ENCODE measurements at regions of chr17 and their contacts with region 1.

Region 1: DNA sequence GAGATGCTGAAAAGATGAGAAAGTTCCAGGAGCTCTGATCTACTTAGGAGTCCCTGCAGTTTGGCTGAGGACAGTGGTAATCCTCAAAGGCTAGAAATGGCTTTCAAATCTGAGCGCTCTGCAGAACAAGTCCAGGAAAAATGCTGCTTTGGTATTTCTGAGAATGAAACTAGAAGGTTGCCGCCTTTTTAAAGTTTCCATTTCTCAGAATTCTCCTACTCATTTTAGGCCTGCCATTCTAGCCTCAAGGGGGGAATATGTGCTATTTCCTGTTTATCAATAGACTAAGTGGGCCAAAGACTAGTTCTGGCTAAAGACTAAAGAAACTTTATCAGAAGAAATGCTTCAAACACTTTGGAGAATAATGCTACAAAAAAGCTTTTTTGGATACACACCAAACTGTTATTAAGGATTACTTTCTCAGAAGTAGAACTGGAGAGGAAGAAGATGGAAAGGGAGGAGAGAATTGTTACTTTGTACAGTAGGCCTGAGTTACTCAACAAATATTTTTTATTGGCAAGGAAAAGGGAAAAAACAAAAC is at the start of gene SLFN12L:
- DNase-seq: no peak
- H3K4me3 ChIP-seq: no peak within 1 kb of the TSS
- H3K4me3 Mint-ChIP-seq: no peak within 1 kb of the TSS
- H3K27ac Mint-ChIP-seq: no peak within 1 kb of the TSS
- H3K4me1 ChIP-seq: no peaks in the 10 kb centered on the region
- H3K4me1 Mint-ChIP-seq: no peaks in the 10 kb centered on the region
- H3K27me3 ChIP-seq: no peaks in the 10 kb centered on the region
- H3K27me3 Mint-ChIP-seq: peaks cover 19% of the 10 kb centered on the region
- CTCF ChIP-seq: no peak
- total RNA-seq, gene SLFN12L: not detected in 2 replicates

Region 2: DNA sequence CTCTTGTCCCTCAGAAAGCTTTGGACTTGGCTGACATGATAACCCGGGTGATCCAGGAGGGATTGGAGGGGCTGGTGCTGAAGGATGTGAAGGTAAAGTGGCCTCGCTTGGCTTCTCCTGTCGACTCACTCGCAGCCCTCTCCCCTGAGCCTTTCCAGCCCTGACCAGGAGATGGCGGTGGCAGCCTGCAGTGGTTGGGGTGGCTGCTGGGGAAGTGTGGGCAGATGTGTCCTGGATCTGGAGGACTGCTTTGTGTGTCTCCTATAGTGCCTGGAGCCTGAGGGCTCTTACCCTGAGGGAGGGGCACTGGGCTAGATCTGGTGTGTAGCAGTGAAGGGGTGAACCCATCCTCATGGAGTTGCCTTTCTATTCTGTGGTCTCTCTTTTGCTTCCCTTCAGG is 539.5 kb before region 1 on chr17:
- CTCF ChIA-PET with region 1: no interaction called
- POLR2A ChIA-PET with region 1: no interaction called
- intact Hi-C with region 1: loop called (anchors 10 kb)
- DNase-seq: peak; percentile 78 to 84
- H3K4me3 ChIP-seq: no peak overlapping the region
- H3K4me3 Mint-ChIP-seq: no peak overlapping the region
- H3K27ac Mint-ChIP-seq: no peak overlapping the region
- H3K4me1 ChIP-seq: no peaks in the 10 kb centered on the region
- H3K4me1 Mint-ChIP-seq: no peaks in the 10 kb centered on the region
- H3K27me3 ChIP-seq: no peaks in the 10 kb centered on the region
- H3K27me3 Mint-ChIP-seq: no peaks in the 10 kb centered on the region
- CTCF ChIP-seq: peak; percentile 86 to 97

Region 3: DNA sequence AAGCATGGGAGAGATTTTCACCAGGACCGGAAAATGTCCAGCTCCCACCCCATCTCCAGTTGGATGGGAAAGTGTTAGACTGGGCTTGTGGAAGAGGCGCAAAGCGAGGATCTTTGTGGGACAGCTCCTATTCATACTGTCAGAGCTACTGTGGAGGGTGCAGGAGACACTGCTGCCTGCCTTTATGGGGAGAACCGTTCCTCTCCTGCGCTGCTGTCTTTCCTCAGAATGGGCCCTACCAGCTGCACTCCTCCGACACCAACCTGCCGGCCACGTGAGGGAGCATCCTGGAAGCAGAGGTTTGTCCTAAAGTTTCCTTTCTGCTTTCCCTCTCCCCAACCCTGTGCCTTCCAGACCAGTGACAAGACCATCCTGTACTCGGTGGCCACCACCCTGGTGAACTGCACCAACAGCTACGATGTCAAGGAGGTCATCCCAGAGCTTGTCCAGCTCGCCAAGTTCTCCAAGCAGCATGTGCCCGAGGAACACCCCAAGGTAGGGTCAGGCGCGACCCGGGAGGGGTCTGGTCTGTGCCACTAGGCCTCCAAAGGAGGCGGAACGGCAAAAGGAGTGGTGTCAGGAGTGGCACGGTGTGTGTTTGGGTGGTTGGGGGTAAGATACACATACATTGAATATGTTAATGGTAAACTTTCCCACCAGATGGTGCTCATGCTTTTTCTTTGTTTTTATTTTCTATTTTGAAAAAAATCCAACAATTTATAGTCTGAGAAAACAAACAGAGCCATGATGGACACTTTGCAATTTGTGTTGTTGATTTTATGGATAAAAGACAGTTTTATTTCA is 366.5 kb before region 1 on chr17:
- CTCF ChIA-PET with region 1: interaction called, 6 read pairs
- POLR2A ChIA-PET with region 1: no interaction called
- intact Hi-C with region 1: loop called (anchors 1 kb)
- DNase-seq: no peak
- H3K4me3 ChIP-seq: no peak overlapping the region
- H3K4me3 Mint-ChIP-seq: no peak overlapping the region
- H3K27ac Mint-ChIP-seq: no peak overlapping the region
- H3K4me1 ChIP-seq: 0 out of 2 replicates have a peak, but pooled peaks cover 7% of the 10 kb centered on the region
- H3K4me1 Mint-ChIP-seq: peaks cover 3% of the 10 kb centered on the region
- H3K27me3 ChIP-seq: no peaks in the 10 kb centered on the region; the same call in 1 of the 2 replicates
- H3K27me3 Mint-ChIP-seq: peaks cover 3% of the 10 kb centered on the region
- CTCF ChIP-seq: no peak

Region 4: DNA sequence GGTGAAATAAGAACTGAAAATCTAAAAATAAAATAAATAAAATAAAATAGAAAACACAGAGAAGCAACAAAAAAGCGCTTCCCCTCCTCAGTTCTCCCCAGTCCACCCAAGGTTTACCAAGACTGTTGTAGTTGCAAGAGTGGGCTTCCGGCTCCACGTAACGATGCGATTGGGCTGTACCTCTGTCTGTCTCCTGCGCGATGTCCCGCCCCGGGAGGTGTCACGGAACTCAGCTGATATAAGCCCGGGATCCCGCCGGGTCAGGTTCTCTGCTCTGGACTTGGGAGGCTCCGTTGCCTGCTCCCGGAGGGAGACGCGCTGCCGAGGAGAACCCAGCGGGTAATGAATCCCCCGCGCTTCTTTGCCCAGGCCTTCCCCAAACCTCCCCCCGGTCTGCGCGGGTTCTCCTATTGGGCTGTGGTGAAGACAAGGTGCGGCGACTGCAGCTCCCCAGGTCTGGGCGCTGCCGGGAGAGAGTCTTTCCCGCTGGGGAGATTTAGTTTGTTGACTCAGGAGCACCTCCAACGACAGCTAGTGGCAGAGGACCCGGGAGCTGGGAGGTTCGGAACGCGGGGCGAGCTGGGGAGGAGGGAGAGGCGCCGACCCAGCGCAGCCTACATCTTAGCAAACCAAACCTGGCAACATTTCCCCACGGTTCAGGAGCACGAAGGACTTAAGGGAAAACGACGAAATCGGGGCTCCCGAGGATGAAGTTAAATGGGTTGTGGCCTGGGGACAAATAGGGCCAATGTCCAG is 294.7 kb before region 1 on chr17 and contains the start of gene SLFN5:
- CTCF ChIA-PET with region 1: no interaction called
- POLR2A ChIA-PET with region 1: no interaction called
- intact Hi-C with region 1: loop called (anchors 5 kb)
- DNase-seq: peak; percentile 90 to 93
- H3K4me3 ChIP-seq: peak within 1 kb of the TSS; percentile 54
- H3K4me3 Mint-ChIP-seq: peak within 1 kb of the TSS; percentile 94
- H3K27ac Mint-ChIP-seq: peak within 1 kb of the TSS; percentile 72
- H3K4me1 ChIP-seq: peaks cover 5% of the 10 kb centered on the region
- H3K4me1 Mint-ChIP-seq: peaks cover 13% of the 10 kb centered on the region
- H3K27me3 ChIP-seq: no peaks in the 10 kb centered on the region
- H3K27me3 Mint-ChIP-seq: peaks cover 8% of the 10 kb centered on the region
- CTCF ChIP-seq: no peak
- total RNA-seq, gene SLFN5: 0.81 and 1.6 TPM in 2 replicates

Region 5: GRCh38 chr17:35312790-35313711 is 224.6 kb before region 1 on chr17:
- CTCF ChIA-PET with region 1: interaction called, 23 read pairs
- POLR2A ChIA-PET with region 1: no interaction called
- intact Hi-C with region 1: loop called (anchors 1 kb)
- DNase-seq: peak in 1 of 2 experiments; percentile 59
- H3K4me3 ChIP-seq: no peak overlapping the region
- H3K4me3 Mint-ChIP-seq: no peak overlapping the region
- H3K27ac Mint-ChIP-seq: no peak overlapping the region
- H3K4me1 ChIP-seq: no peaks in the 10 kb centered on the region; the same call in 1 of the 2 replicates
- H3K4me1 Mint-ChIP-seq: no peaks in the 10 kb centered on the region
- H3K27me3 ChIP-seq: no peaks in the 10 kb centered on the region
- H3K27me3 Mint-ChIP-seq: peaks cover 3% of the 10 kb centered on the region
- CTCF ChIP-seq: peak; percentile 72 to 80

Region 6: DNA sequence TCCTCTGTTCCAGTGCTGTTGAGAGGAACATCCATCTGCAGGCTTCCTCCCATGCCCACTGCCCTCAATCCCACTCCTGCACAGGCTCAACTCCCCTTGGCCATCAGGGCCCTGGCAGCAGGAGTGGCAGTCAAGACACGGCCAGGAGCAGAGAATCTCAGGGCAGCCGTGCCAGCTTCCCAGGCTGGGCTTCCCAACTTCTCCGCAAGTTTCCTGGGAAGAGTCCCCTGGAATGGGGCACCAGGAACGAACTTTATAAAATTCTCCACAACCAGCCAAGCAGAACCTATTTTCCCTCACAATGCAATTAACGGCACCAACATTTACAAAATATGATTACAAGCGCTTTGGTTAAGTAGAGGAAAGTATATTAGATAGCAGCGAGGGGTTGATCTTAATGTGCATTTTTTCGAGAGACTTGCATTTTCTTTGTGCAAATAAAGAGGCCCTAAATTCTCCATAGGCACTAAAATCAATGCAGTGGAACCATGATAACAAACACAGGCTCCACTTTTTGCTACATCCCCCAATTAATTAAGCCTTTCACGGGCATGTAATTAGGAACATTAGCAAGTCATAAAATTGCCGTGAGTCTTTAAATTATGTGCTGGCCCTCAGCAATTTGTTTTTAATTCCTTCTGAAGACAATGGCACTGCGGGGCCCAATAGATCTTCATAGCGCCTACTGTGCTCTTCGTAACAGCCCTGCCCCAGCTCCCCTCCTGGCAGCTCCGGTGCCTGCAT is 1299.7 kb after region 1 on chr17:
- CTCF ChIA-PET with region 1: no interaction called
- POLR2A ChIA-PET with region 1: no interaction called
- intact Hi-C with region 1: no loop called
- DNase-seq: no peak
- H3K4me3 ChIP-seq: no peak overlapping the region
- H3K4me3 Mint-ChIP-seq: no peak overlapping the region
- H3K27ac Mint-ChIP-seq: no peak overlapping the region
- H3K4me1 ChIP-seq: no peaks in the 10 kb centered on the region
- H3K4me1 Mint-ChIP-seq: no peaks in the 10 kb centered on the region
- H3K27me3 ChIP-seq: no peaks in the 10 kb centered on the region
- H3K27me3 Mint-ChIP-seq: peaks cover 12% of the 10 kb centered on the region
- CTCF ChIP-seq: no peak

Measured in Caco-2 (cell line).